Posterior cingulate gyrus (tissue), 11 donors: ENCODE measurements at regions of chr7 and their contacts with region 1.

Region 1: DNA sequence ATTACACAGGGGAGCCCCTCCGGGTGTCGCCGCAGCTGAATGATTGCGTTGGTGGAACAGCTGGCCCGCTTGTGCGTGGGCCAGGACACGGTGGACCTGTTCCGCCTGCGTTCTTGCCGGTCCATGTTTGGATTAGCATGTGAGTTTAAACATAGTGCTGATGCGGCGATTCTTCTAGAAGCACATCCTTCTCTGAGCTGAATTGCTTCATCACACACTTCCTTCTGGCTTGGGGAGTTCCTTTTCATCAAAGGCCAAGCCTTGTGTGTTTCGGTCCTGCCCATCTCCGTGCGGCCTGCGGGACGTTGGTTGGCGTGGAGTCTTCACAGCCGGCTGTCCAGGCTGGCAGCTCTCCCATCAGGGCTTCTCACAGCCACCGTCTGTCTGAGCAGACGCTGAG is 45.5 kb upstream of the SLC29A4 start:
- DNase-seq: peak; percentile 44 to 95 (median 68)

Region 2: DNA sequence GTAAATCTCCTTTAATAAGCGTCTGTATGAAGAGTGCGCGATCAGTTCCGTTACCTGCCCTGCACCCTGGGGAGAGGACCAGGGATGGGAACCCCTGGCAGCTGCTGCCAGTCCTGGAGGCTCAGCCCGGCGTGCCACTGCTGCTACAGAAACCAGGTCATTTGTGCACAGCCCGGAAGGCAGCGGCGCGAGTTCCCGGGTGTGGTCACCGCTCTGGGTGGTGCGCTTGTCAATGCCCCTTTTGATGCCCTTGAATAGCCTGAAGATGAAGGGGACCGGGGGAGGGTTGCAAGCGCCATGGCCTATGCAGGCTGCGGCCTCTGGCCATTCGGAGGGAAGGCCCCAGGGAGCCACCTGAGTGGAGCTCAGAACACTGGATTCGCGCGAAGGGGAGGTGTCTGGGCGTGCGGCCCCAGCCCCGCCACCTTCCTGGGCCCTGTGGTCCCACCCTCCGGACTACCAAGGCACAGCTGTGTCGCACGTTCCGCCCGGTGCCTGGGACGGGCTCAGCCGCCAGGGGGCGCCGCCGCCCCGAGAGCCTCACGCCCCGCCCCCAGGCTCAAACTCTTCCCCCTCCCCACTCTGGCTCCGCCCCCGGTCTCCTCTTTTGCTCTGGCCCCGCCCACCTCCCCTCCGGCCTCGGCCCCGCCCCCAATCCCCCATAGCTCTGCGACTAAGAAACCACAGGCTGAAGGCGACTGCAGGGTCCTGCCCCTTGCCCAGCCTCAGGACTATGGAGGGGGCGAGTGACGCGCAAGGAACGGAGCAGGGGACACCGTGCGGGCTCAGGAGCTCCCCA is 445.3 kb before region 1 on chr7:
- intact Hi-C with region 1: no loop called
- DNase-seq: peak; percentile 64 to 97 (median 86)

Region 3: GRCh38 chr7:5450549-5451372 is 213.5 kb after region 1 on chr7:
- intact Hi-C with region 1: loop called (anchors 1 kb)
- DNase-seq: peak in 9 of 10 donors; percentile 62 to 95 (median 69)